Activated CD4-positive, alpha-beta T cell treated with anti-CD3 and anti-CD28 coated beads, Interleukin-2, amount 10 ng/mL, durations not matched to agents 7 days and 5 days (primary cell): ENCODE measurements at regions of chr19 and their contacts with region 1.

Region 1: GRCh38 chr19:13093407-13094105 is 9.1 kb downstream of the LYL1 start:
- DNase-seq: peak; percentile 84
- H3K4me3 Mint-ChIP-seq: no peak overlapping the region
- H3K27ac Mint-ChIP-seq: no peak overlapping the region
- H3K4me1 Mint-ChIP-seq: peaks cover 23% of the 10 kb centered on the region
- H3K27me3 Mint-ChIP-seq: peaks cover 38% of the 10 kb centered on the region

Region 2: DNA sequence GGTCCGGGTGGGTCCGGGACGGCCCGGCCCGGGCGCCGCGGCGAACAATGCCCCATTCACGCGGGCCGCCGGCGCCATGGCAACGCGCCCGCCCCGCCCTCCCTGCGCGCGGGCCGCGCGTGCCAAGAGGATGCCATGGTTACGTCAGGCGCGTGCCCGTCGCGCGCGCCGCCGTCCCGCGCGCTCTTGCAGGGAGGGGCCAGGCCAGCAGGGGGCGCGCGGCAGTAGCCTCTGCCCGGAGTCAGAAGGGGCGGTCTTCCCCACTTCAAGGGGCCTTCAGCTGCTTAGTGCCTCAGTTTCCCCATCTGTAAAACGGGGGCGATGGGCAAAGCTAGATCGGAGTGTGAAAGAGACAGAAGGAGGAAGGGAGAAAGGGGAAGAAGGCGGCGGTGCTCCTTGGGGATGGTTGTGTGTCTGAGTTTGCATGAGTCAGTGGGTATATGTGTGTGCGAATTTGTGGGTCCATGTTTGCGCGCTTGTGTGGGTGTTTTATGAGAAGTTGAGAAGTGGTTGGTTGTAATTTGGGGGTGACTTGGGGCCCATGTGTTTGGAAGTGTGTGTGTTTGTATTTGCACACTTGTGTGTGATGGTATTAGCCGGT is 109.9 kb before region 1 on chr19:
- CTCF ChIA-PET with region 1: interaction called, 64 read pairs
- POLR2A ChIA-PET with region 1: no interaction called
- DNase-seq: peak; percentile 73
- H3K4me3 Mint-ChIP-seq: no peak overlapping the region
- H3K27ac Mint-ChIP-seq: no peak overlapping the region
- H3K4me1 Mint-ChIP-seq: no peaks in the 10 kb centered on the region
- H3K27me3 Mint-ChIP-seq: no peaks in the 10 kb centered on the region

Region 3: GRCh38 chr19:13112563-13112962 is 19.0 kb after region 1 on chr19:
- CTCF ChIA-PET with region 1: no interaction called
- POLR2A ChIA-PET with region 1: no interaction called
- DNase-seq: no peak
- H3K4me3 Mint-ChIP-seq: no peak overlapping the region
- H3K27ac Mint-ChIP-seq: no peak overlapping the region
- H3K4me1 Mint-ChIP-seq: peaks cover 16% of the 10 kb centered on the region
- H3K27me3 Mint-ChIP-seq: no peaks in the 10 kb centered on the region